Activated T-helper 1 cell treated with anti-CD3 and anti-CD28 coated beads, Interleukin-12 subunit alpha, Interleukin-12 subunit beta, Interleukin-2, Interleukin-4 antibody, amounts not matched to agents 30 ng/mL and 10 ng/mL and 1 ng/mL, durations not matched to agents 14 hours and 24 hours and 36 hours (primary cell): ENCODE measurements at regions of chr14 and their contacts with region 1.

Region 1: GRCh38 chr14:58244556-58245387 is at the start of gene PSMA3:
- DNase-seq: peak; percentile 97
- H3K4me3 Mint-ChIP-seq: peak within 1 kb of the TSS; percentile 95
- H3K27ac Mint-ChIP-seq: peak within 1 kb of the TSS; percentile 94
- H3K4me1 Mint-ChIP-seq: peaks cover 43% of the 10 kb centered on the region
- H3K27me3 Mint-ChIP-seq: no peaks in the 10 kb centered on the region
- total RNA-seq, gene PSMA3: 453 and 500 TPM in 2 replicates

Region 2: DNA sequence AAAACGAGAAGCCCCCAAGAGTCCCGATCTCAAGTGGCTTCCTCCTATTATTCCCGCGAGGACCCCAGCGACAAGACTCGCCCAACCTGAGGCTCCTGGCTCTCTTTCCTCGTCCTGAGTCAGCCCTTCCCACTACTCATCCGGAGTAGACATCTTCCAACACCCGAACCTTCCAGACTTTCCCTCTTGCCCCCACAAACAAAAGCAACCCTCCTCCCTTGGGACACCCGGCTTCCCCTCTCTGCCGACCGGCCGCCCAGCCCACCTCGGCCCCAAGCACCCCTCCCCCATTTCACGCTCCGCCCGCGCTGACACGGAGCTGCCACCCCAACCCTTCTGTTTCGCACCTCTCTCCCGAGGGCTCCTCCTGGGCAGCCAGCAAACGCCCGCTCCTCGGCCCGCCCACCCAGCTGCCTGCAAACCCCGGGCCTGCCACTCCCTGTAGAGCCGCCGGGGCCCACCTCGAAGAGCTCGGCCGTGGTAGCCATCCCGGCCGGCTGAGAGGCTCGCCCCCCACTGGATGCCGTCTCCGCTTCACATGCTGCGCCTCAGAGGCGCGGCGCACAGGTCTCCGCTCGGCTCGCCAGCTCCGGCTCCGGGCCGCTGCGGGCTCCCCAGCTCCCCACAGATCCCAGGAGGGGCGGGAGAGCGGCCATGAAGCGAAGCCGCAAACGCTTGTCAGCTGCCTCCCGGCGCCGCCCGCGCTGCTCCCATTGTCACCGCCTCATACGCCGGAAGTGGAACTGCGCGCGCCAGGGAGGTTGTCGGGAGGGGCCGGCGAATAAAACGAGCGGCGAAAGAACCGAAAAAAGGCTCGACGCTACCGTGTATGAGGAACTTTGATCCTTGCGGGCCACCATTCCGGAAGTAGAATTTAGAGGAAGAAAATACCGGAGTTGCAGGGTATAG is 976.4 kb before region 1 on chr14 and contains the starts of genes AP5M1 and EXOC5:
- intact Hi-C with region 1: loop called (anchors 5 kb)
- DNase-seq: peak; percentile 92
- H3K4me3 Mint-ChIP-seq: peak within 1 kb of the TSS; percentile 99
- H3K27ac Mint-ChIP-seq: peak within 1 kb of the TSS; percentile 100
- H3K4me1 Mint-ChIP-seq: peaks cover 60% of the 10 kb centered on the region
- H3K27me3 Mint-ChIP-seq: no peaks in the 10 kb centered on the region
- total RNA-seq, gene AP5M1: 38.7 and 48.2 TPM in 2 replicates
- total RNA-seq, gene EXOC5: 75.9 and 76.6 TPM in 2 replicates

Region 3: DNA sequence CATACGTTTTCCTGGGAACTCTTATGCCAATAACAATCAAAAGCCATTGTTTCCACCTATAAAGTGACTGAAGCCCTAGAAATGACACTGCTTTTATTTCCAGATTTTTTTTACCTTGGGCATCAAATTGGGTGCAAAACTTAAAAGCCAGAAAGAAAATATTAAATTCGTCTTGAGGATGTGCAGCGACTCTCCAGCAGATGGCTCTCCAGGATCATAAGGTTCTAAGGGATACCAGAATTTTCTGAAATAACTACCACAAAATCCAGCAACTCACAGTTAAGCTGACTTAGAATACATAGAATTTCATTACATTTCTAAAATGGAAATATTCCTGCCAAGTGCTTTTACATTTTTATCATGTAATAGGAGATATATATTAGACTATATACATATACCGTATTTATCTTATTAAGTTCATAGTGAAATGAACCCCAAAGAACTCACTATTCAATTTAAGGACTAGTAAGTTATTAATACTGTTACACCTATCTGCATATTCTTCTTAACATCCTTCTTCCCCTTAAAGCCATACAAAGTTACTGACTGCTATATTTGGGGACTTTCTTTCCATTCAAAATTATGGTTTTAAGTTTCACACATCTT is 136.7 kb before region 1 on chr14:
- intact Hi-C with region 1: loop called (anchors 2 kb)
- DNase-seq: peak; percentile 2
- H3K4me3 Mint-ChIP-seq: no peak overlapping the region
- H3K27ac Mint-ChIP-seq: no peak overlapping the region
- H3K4me1 Mint-ChIP-seq: no peaks in the 10 kb centered on the region
- H3K27me3 Mint-ChIP-seq: peaks cover 16% of the 10 kb centered on the region

Region 4: GRCh38 chr14:58270628-58271027 is 25.9 kb after region 1 on chr14:
- intact Hi-C with region 1: no loop called
- DNase-seq: no peak
- H3K4me3 Mint-ChIP-seq: no peak overlapping the region
- H3K27ac Mint-ChIP-seq: no peak overlapping the region
- H3K4me1 Mint-ChIP-seq: peaks cover 24% of the 10 kb centered on the region
- H3K27me3 Mint-ChIP-seq: no peaks in the 10 kb centered on the region

Region 5: GRCh38 chr14:58280954-58281787 is 36.4 kb after region 1 on chr14:
- intact Hi-C with region 1: loop called (anchors 2 kb)
- DNase-seq: peak; percentile 19
- H3K4me3 Mint-ChIP-seq: peak overlapping the region; percentile 62
- H3K27ac Mint-ChIP-seq: peak overlapping the region; percentile 92
- H3K4me1 Mint-ChIP-seq: peaks cover 51% of the 10 kb centered on the region
- H3K27me3 Mint-ChIP-seq: no peaks in the 10 kb centered on the region

Region 6: GRCh38 chr14:58427281-58428117 is 182.7 kb after region 1 on chr14 and contains the starts of genes KIAA0586 and TIMM9:
- intact Hi-C with region 1: loop called (anchors 1 kb)
- DNase-seq: peak; percentile 95
- H3K4me3 Mint-ChIP-seq: peak within 1 kb of the TSS; percentile 86
- H3K27ac Mint-ChIP-seq: peak within 1 kb of the TSS; percentile 96
- H3K4me1 Mint-ChIP-seq: peaks cover 49% of the 10 kb centered on the region
- H3K27me3 Mint-ChIP-seq: no peaks in the 10 kb centered on the region
- total RNA-seq, gene KIAA0586: 19.7 and 19.8 TPM in 2 replicates
- total RNA-seq, gene TIMM9: 66.5 and 67.4 TPM in 2 replicates

Region 7: DNA sequence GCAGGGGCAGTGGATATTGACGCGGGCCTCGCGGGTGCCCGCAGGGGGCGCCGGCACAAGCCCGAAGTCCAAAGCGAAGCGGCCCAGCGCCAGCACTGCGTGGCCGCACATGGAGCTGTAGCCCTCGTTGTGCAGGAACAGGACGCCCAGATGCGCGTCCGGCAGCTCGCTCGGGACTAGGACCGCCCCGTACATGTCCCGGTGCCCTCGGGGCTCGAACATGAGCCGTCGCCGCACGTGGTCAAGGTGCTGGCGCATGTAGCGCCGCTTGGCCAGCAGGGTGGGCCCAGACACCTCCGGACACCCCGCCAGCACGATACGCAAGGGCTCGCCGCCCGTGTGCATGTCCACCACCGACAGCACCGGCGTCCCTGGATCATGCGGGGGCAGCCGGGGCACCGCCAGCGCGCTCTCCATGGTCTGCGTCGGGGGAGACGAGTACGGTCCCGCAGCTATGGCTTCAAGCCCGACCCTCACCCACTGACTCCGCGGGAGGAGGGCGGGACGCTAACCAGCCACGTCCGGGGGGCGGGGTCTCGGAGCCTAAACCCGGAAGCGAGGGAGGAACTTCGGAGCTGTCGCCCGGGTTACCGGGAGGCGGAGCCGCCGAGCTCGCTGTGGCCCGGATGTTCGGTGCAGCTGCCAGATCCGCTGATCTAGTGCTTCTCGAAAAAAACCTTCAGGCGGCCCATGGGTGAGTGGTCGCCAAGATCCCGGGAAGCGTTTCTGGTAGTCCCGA is 1239.3 kb after region 1 on chr14 and contains the starts of genes JKAMP and L3HYPDH:
- intact Hi-C with region 1: loop called (anchors 1 kb)
- DNase-seq: peak; percentile 95
- H3K4me3 Mint-ChIP-seq: peak within 1 kb of the TSS; percentile 94
- H3K27ac Mint-ChIP-seq: peak within 1 kb of the TSS; percentile 90
- H3K4me1 Mint-ChIP-seq: peaks cover 61% of the 10 kb centered on the region
- H3K27me3 Mint-ChIP-seq: no peaks in the 10 kb centered on the region
- total RNA-seq, gene JKAMP: 27.6 and 28.8 TPM in 2 replicates
- total RNA-seq, gene L3HYPDH: 14.0 and 15.9 TPM in 2 replicates